ENCODE measurements at regions of chr14 and their contacts with region 1.

Region 1: GRCh38 chr14:68979021-68979782 is at the start of gene ACTN1:
- DNase-seq: peak; percentile 96 to 97
- ATAC-seq: peak; percentile 84 to 91
- H3K4me3 ChIP-seq: peak within 1 kb of the TSS; percentile 98
- H3K27ac ChIP-seq: peak within 1 kb of the TSS; percentile 96 to 99
- H3K4me1 ChIP-seq: peaks cover 37% of the 10 kb centered on the region
- CTCF ChIP-seq: no peak
- EP300 ChIP-seq: no peak
- POLR2A ChIP-seq: peak; percentile 83
- RAD21 ChIP-seq: peak in 1 of 2 experiments; percentile 15; a peak in 2 of 5 replicates
- polyA plus RNA-seq, gene ACTN1: 207 and 208 TPM in 2 replicates

Region 2: GRCh38 chr14:68926236-68926635 is 53.0 kb before region 1 on chr14:
- CTCF ChIA-PET with region 1: interaction called, 12 read pairs
- POLR2A ChIA-PET with region 1: no interaction called
- DNase-seq: peak in 1 of 2 experiments; percentile 46
- ATAC-seq: no peak
- H3K4me3 ChIP-seq: no peak overlapping the region
- H3K27ac ChIP-seq: no peak overlapping the region
- H3K4me1 ChIP-seq: peaks cover 26% of the 10 kb centered on the region
- CTCF ChIP-seq: peak; percentile 23; the same call in 2 of the 3 replicates
- EP300 ChIP-seq: no peak
- POLR2A ChIP-seq: no peak
- RAD21 ChIP-seq: no peak

Region 3: GRCh38 chr14:68961781-68962584 is 17.2 kb before region 1 on chr14:
- CTCF ChIA-PET with region 1: interaction called, 15 read pairs
- POLR2A ChIA-PET with region 1: no interaction called
- DNase-seq: peak in 1 of 2 experiments; percentile 70
- ATAC-seq: peak; percentile 48 to 54; a peak in 5 of 6 replicates
- H3K4me3 ChIP-seq: no peak overlapping the region
- H3K27ac ChIP-seq: peak overlapping the region in 1 of 2 experiments; percentile 46; a peak in 2 of 6 replicates
- H3K4me1 ChIP-seq: peaks cover 100% of the 10 kb centered on the region
- CTCF ChIP-seq: no peak
- EP300 ChIP-seq: no peak
- POLR2A ChIP-seq: no peak
- RAD21 ChIP-seq: no peak

Measured in A549 (cell line).